Activated naive CD8-positive, alpha-beta T cell treated with anti-CD3 and anti-CD28 coated beads, Interleukin-2, amount 10 ng/mL, durations not matched to agents 7 days and 5 days (primary cell): ENCODE measurements at regions of chr14 and their contacts with region 1.

Region 1: DNA sequence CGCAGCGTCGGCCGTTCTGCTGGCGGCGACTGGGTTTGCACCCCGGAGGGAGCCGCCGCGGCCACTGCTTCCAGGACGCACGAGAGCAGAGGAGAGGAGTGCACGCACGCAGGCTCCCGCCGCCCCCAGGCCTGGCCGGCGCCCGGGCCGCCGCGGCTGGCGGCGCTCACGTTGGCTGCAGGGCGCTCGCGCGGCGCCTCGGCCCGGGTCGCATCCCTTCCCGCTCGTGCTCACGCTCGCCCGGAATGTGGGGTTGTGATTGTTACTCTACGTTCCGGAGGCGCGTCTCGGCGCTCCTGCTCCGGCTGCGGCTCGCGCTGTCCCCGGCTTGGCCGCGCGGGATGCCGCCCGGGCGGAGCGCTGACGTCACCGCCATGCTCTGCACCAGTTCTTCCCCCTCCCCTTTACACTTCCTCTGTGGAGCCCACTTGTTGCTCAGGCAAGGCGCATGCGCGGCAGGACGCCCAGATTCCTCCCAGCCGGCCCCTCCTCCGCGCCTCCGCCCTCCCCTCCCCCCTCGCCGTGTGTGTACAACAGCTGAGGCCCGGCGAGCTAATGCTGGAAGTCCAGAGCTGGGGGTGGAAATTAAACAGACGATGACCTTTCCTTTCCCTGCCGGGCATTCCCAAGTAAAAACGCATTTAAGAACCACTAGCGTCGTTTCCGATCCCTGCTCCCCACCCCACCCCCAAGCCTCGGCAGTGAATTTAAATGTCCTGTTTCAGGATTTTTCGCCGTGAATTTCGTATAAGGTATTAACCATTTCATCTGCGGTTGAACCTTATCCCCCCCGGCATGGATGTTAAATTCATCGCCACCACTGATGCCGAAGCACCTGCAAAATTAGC is at the start of gene IRF2BPL:
- DNase-seq: peak; percentile 95
- ATAC-seq: peak; percentile 73
- H3K4me3 Mint-ChIP-seq: peak within 1 kb of the TSS; percentile 96
- H3K27ac Mint-ChIP-seq: peak within 1 kb of the TSS; percentile 97
- H3K4me1 Mint-ChIP-seq: peaks cover 42% of the 10 kb centered on the region
- H3K27me3 Mint-ChIP-seq: no peaks in the 10 kb centered on the region
- total RNA-seq, gene IRF2BPL: 38.5 to 41.0 TPM

Region 2: GRCh38 chr14:76908834-76909233 is 119.8 kb before region 1 on chr14:
- POLR2A ChIA-PET with region 1: interaction called, 23 read pairs
- DNase-seq: peak; percentile 73
- ATAC-seq: peak; percentile 90
- H3K4me3 Mint-ChIP-seq: peak overlapping the region; percentile 81
- H3K27ac Mint-ChIP-seq: peak overlapping the region; percentile 99
- H3K4me1 Mint-ChIP-seq: peaks cover 54% of the 10 kb centered on the region
- H3K27me3 Mint-ChIP-seq: no peaks in the 10 kb centered on the region

Region 3: DNA sequence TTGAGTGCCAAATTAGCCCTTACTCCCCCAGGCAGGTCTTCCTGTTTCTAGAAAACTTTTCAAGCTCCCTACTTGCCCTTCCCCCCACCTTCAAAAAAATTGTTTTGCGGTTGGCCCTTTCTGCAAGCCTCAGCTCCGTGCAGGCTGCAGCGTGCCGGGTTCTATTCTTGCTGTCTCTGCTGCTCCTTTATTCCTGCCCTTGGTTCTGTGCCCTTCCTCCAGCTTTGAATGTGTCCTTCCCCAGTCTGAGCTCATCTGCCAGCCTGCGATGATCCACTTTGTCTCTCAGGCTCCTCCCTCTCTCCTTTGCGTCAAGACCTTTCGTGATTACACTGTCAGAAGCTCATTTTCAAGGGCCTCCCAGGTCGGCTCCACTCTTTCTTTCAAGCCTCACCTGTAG is 98.7 kb before region 1 on chr14:
- POLR2A ChIA-PET with region 1: interaction called, 23 read pairs
- DNase-seq: peak; percentile 67
- ATAC-seq: peak; percentile 75
- H3K4me3 Mint-ChIP-seq: peak overlapping the region; percentile 71
- H3K27ac Mint-ChIP-seq: peak overlapping the region; percentile 87
- H3K4me1 Mint-ChIP-seq: peaks cover 67% of the 10 kb centered on the region
- H3K27me3 Mint-ChIP-seq: no peaks in the 10 kb centered on the region

Region 4: GRCh38 chr14:76977793-76978720 is 50.6 kb before region 1 on chr14:
- POLR2A ChIA-PET with region 1: interaction called, 13 read pairs
- DNase-seq: peak; percentile 73
- ATAC-seq: peak; percentile 98
- H3K4me3 Mint-ChIP-seq: peak overlapping the region; percentile 72
- H3K27ac Mint-ChIP-seq: peak overlapping the region; percentile 94
- H3K4me1 Mint-ChIP-seq: peaks cover 30% of the 10 kb centered on the region
- H3K27me3 Mint-ChIP-seq: no peaks in the 10 kb centered on the region

Region 5: DNA sequence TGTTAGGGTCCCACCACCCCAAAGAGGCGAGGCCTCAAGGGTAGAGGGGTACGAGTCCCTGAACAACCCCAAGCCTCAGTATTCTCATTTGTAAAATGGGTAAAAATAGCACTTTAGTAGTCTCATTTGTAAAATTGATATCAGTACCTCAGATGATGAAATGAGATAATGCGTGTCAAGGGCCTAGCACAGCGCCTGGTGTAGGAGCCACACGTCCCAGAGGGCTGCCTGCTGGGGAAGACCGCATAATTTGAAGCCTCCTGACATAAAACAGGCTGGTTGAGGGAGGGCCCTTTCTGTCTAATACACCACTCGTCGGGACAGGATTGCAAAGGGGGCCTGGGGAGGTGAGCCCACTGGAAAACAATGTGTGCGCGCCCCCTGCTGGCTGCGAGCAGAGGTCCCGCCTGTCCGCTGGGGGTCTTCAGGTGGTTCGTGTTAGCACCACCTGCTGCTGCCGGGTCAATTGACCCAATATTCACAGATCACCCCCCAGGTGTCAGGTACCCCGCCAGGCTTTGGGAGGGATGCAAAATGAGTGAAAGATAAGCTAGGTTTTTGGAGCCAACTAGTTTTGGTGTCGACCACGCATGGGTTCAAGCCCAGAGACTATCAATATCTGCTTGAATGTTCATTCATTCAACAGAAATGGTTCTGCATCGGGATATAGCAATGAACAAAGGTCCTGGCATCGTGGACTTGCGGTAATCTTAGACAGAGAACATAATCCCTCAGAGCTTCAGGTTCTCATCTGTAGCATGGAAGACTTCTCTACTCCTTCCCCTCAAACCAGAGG is 24.6 kb after region 1 on chr14:
- POLR2A ChIA-PET with region 1: interaction called, 12 read pairs
- DNase-seq: peak; percentile 83
- ATAC-seq: peak; percentile 89
- H3K4me3 Mint-ChIP-seq: no peak overlapping the region
- H3K27ac Mint-ChIP-seq: peak overlapping the region; percentile 78
- H3K4me1 Mint-ChIP-seq: peaks cover 8% of the 10 kb centered on the region
- H3K27me3 Mint-ChIP-seq: no peaks in the 10 kb centered on the region